Heart left ventricle (tissue), 16 donors: ENCODE measurements at regions of chr17 and their contacts with region 1.

Region 1: GRCh38 chr17:76307299-76307965 is 644 bp downstream of the QRICH2 start:
- DNase-seq: no peak
- ATAC-seq: peak in 1 of 4 donors; percentile 10
- H3K4me3 ChIP-seq: no peak overlapping the region
- H3K27ac ChIP-seq: no peak overlapping the region
- H3K4me1 ChIP-seq: peaks cover 0 to 3% (median 0%) of the 10 kb centered on the region in 12 donors
- H3K27me3 ChIP-seq: no peaks in the 10 kb centered on the region
- CTCF ChIP-seq: no peak
- POLR2A ChIP-seq: no peak

Region 2: GRCh38 chr17:76353599-76354316 is 46.3 kb after region 1 on chr17 and contains the start of gene PRPSAP1:
- intact Hi-C with region 1: loop called in 2 of 10 experiments (anchors 5 kb)
- DNase-seq: peak; percentile 88 to 93 (median 90)
- ATAC-seq: peak; percentile 96 to 99 (median 98)
- H3K4me3 ChIP-seq: peak within 1 kb of the TSS; percentile 64 to 100 (median 94)
- H3K27ac ChIP-seq: peak within 1 kb of the TSS; percentile 72 to 99 (median 90)
- H3K4me1 ChIP-seq: peaks cover 0 to 30% (median 13%) of the 10 kb centered on the region in 12 donors
- H3K27me3 ChIP-seq: no peaks in the 10 kb centered on the region
- CTCF ChIP-seq: peak; percentile 31 to 82 (median 59)
- POLR2A ChIP-seq: peak; percentile 36 to 65
- total RNA-seq, gene PRPSAP1: 28.2 to 39.7 (median 30.9) TPM

Region 3: DNA sequence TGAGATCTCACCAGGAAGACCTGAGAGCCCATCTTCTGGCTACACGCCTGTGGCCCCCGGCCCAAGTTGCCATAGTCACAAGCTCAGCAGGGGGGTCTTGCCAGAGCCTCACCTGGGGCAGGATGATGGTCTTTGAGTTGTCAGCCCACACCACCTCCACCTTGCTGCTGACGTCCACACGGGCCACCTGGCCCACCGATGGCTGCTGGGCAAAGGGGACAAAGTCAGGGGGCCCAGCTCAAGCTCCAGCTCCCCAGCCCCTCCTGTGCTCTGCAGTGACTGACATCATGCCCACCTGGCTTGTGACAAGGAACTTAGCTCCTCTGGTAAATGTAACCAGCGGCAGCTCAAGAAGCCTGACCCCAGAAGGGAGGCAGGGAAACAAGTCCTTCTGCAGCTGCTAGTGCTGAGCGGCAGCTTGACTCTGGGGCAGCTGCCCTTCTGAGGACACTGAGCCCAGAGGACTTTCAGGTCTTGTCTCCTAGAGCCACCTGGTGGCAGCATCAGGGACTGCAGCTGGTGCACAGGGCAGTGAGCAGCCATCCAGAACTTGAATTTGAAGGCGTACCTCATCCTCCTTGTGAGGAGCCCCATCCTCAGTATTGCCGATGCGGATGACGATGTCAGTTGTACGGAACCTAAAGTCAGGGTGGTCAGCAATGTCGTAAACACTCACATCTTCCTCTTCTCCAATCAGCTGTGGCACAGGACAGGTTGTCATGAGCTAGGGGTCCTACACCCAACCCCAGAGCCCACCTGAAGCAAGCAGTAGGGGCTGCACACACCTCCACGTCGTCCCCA is 90.5 kb after region 1 on chr17:
- intact Hi-C with region 1: loop called (anchors 1 to 5 kb)
- DNase-seq: peak; percentile 85 to 94 (median 90)
- ATAC-seq: peak; percentile 38 to 86 (median 82)
- H3K4me3 ChIP-seq: no peak overlapping the region
- H3K27ac ChIP-seq: no peak overlapping the region
- H3K4me1 ChIP-seq: peaks cover 0 to 19% (median 5%) of the 10 kb centered on the region in 12 donors
- H3K27me3 ChIP-seq: no peaks in the 10 kb centered on the region
- CTCF ChIP-seq: peak; percentile 92 to 99 (median 98)
- POLR2A ChIP-seq: no peak

Region 4: GRCh38 chr17:76501018-76501826 is 193.8 kb after region 1 on chr17 and contains the start of gene RHBDF2:
- intact Hi-C with region 1: loop called in 5 of 10 experiments (anchors 5 to 10 kb)
- DNase-seq: peak; percentile 88 to 97 (median 92)
- ATAC-seq: peak; percentile 71 to 90 (median 85)
- H3K4me3 ChIP-seq: peak within 1 kb of the TSS; percentile 46 to 85 (median 80)
- H3K27ac ChIP-seq: peak within 1 kb of the TSS; percentile 72 to 96 (median 92)
- H3K4me1 ChIP-seq: peaks cover 10 to 71% (median 42%) of the 10 kb centered on the region in 12 donors
- H3K27me3 ChIP-seq: no peaks in the 10 kb centered on the region
- CTCF ChIP-seq: no peak
- POLR2A ChIP-seq: peak; percentile 28 to 94
- total RNA-seq, gene RHBDF2: 6.3 to 49.4 (median 14.1) TPM

Region 5: GRCh38 chr17:76547184-76547641 is 239.8 kb after region 1 on chr17:
- intact Hi-C with region 1: no loop called
- DNase-seq: peak in 4 of 5 donors; percentile 74 to 77 (median 75)
- ATAC-seq: peak; percentile 19 to 67 (median 50)
- H3K4me3 ChIP-seq: no peak overlapping the region
- H3K27ac ChIP-seq: peak overlapping the region in 11 of 12 donors; percentile 0 to 84 (median 24)
- H3K4me1 ChIP-seq: peaks cover 10 to 61% (median 46%) of the 10 kb centered on the region in 12 donors
- H3K27me3 ChIP-seq: no peaks in the 10 kb centered on the region
- CTCF ChIP-seq: peak; percentile 58 to 81 (median 75)
- POLR2A ChIP-seq: no peak